ENCODE measurements at regions of chr10 and their contacts with region 1.

Region 1: DNA sequence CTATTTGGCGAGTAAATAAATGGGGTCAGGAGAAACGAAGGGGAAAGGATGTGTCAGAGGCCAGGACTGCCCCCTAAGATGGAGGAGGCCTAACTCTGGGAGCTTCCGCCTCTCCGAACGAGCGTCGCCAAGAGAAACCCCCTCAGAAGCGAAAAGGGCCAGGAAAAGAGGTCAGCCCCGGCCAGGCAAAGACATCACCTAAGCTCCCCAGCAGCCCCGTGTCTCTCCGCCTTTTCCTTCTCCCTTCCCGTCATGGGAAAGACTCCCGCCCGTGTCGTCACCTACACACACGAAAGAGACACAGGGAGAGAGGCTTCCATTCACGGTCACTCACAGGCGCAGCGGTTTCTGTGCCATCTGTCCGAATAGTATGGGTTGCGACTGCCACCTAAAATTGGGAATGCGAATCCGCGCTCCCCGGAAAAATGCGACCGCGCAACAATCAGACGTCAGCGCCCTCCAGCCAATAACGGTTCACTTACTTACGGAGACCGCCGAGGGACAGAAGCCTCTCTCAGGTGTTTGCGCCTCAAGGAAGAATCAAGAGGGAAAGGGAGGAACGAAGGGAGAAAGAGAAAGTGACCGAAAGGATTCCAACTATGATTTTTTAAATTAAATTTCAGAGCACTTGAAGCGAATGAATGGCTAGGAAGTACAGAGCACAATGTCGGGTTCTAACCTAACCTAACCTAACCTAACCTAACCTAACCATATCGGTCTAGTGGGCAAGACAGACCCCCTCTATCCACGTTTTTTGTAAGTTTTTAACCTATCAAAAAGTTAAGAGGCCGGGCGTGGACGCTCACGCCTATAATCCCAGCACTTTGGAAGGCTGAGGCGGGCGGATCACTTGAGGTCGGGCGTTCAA is at the start of gene CWF19L1:
- DNase-seq: peak; percentile 78 to 81 (median 79)
- H3K4me3 ChIP-seq: peak within 1 kb of the TSS; percentile 90 to 100 (median 100)
- H3K27ac ChIP-seq: peak within 1 kb of the TSS; percentile 93 to 95
- H3K4me1 ChIP-seq: peaks cover 0 to 16% (median 13%) of the 10 kb centered on the region in 4 experiments
- H3K27me3 ChIP-seq: no peaks in the 10 kb centered on the region

Region 2: GRCh38 chr10:100158044-100158808 is 109.2 kb before region 1 on chr10:
- CTCF ChIA-PET with region 1: no interaction called
- POLR2A ChIA-PET with region 1: no interaction called
- DNase-seq: no peak
- H3K4me3 ChIP-seq: no peak overlapping the region
- H3K27ac ChIP-seq: peak overlapping the region in 1 of 2 experiments; percentile 39
- H3K4me1 ChIP-seq: no peaks in the 10 kb centered on the region
- H3K27me3 ChIP-seq: no peaks in the 10 kb centered on the region

Region 3: DNA sequence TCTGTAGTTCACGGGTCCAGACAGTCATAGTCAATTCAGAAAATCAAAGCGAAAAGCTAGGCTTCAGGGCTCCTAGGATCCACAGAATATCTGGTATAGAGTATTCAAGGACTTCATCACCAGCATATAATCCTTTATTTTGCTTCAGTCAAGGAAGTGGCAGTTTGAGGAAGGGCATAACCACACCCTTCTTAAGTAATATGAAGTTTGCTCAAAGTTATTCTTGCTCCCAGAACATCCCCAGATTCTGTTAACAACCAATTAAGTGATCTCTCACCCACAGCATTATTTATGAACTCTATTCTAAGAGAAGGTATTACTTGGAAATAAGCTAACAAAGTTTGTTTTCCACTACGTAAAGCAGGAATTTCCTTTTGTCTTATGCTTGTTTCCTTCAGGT is 13.3 kb before region 1 on chr10:
- CTCF ChIA-PET with region 1: no interaction called
- POLR2A ChIA-PET with region 1: no interaction called
- DNase-seq: no peak
- H3K4me3 ChIP-seq: no peak overlapping the region
- H3K27ac ChIP-seq: no peak overlapping the region
- H3K4me1 ChIP-seq: peaks cover 0 to 8% (median 3%) of the 10 kb centered on the region in 4 experiments
- H3K27me3 ChIP-seq: no peaks in the 10 kb centered on the region

Region 4: DNA sequence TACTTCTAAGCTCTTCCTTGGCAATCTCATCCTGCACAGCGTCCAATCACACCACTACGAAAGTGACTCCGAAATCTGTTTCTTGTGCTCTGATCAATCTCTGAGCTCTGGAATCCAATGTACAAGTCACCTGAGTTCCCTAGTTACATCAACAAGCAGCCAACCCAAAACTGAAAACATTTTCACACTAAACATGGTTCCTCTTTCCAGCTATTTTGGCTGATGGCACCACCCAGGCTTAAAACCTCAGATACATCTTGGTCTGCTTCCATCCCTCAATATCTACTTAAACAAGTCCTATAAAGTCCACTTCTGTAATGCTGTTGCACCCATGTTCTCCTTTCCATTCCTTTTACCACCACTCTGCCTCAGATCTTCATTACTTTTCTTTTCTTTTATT is 15.4 kb after region 1 on chr10:
- CTCF ChIA-PET with region 1: interaction called, 10 read pairs
- POLR2A ChIA-PET with region 1: interaction called, 3 read pairs
- DNase-seq: peak in 1 of 3 donors; percentile 10
- H3K4me3 ChIP-seq: no peak overlapping the region
- H3K27ac ChIP-seq: no peak overlapping the region
- H3K4me1 ChIP-seq: peaks cover 4 to 18% (median 16%) of the 10 kb centered on the region in 4 experiments
- H3K27me3 ChIP-seq: no peaks in the 10 kb centered on the region

Region 5: GRCh38 chr10:100327007-100327717 is 59.7 kb after region 1 on chr10:
- CTCF ChIA-PET with region 1: no interaction called
- POLR2A ChIA-PET with region 1: no interaction called
- DNase-seq: peak; percentile 49 to 90 (median 87)
- H3K4me3 ChIP-seq: no peak overlapping the region
- H3K27ac ChIP-seq: no peak overlapping the region
- H3K4me1 ChIP-seq: peaks cover 10 to 19% (median 12%) of the 10 kb centered on the region in 4 experiments
- H3K27me3 ChIP-seq: no peaks in the 10 kb centered on the region

Measured in common myeloid progenitor, CD34-positive (primary cell).